ENCODE measurements at regions of chr17 and their contacts with region 1.

Region 1: GRCh38 chr17:75749545-75750389 is 15.2 kb downstream of the GALK1 start:
- DNase-seq: peak; percentile 77
- H3K4me3 Mint-ChIP-seq: no peak overlapping the region
- H3K27ac Mint-ChIP-seq: no peak overlapping the region
- H3K4me1 Mint-ChIP-seq: peaks cover 16% of the 10 kb centered on the region
- H3K27me3 Mint-ChIP-seq: peaks cover 12% of the 10 kb centered on the region

Region 2: GRCh38 chr17:75515496-75516254 is 234.1 kb before region 1 on chr17 and contains the start of gene CASKIN2:
- intact Hi-C with region 1: no loop called
- DNase-seq: peak; percentile 62
- H3K4me3 Mint-ChIP-seq: peak within 1 kb of the TSS; percentile 78
- H3K27ac Mint-ChIP-seq: no peak within 1 kb of the TSS
- H3K4me1 Mint-ChIP-seq: peaks cover 18% of the 10 kb centered on the region
- H3K27me3 Mint-ChIP-seq: peaks cover 17% of the 10 kb centered on the region
- total RNA-seq, gene CASKIN2: 0.88 and 2.0 TPM in 2 replicates

Region 3: GRCh38 chr17:75601057-75602051 is 148.4 kb before region 1 on chr17:
- intact Hi-C with region 1: loop called (anchors 1 kb)
- DNase-seq: peak; percentile 42
- H3K4me3 Mint-ChIP-seq: no peak overlapping the region
- H3K27ac Mint-ChIP-seq: no peak overlapping the region
- H3K4me1 Mint-ChIP-seq: no peaks in the 10 kb centered on the region
- H3K27me3 Mint-ChIP-seq: peaks cover 1% of the 10 kb centered on the region

Region 4: DNA sequence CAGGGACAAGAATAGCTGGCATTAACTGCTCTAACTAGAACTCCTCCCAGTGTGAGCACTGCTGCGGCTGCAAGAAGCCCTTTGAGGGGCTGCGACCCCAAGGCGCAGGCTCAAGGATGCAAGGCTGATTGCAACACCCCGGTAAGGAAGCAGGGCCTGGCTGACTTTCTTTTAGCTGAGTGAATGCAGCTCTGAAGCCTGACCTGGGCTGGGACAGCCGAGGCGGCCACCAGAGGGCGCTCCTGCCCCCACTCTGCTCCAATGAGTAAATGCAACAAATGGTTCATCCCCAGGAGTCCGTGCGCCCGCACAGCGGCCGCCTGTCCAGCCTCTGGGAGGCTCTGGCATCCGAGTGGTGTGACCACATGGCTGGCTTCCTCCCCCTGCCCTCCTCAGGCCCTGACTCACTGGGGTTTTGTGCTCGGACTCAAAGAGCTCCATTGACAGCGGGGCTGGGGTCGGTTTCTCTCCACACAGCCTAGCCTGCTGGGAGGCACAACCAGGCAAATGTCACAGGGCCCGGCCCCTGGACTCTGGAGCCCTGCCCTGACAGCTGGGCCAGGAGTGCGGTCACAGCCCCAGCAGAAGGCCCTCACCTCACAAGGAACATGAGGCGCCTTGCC is 116.8 kb before region 1 on chr17 and contains the start of gene SMIM5:
- intact Hi-C with region 1: loop called (anchors 1 kb)
- DNase-seq: peak; percentile 77
- H3K4me3 Mint-ChIP-seq: no peak within 1 kb of the TSS
- H3K27ac Mint-ChIP-seq: no peak within 1 kb of the TSS
- H3K4me1 Mint-ChIP-seq: no peaks in the 10 kb centered on the region
- H3K27me3 Mint-ChIP-seq: no peaks in the 10 kb centered on the region
- total RNA-seq, gene SMIM5: 0.05 TPM in 1 of 2 replicates, not detected in the other

Region 5: DNA sequence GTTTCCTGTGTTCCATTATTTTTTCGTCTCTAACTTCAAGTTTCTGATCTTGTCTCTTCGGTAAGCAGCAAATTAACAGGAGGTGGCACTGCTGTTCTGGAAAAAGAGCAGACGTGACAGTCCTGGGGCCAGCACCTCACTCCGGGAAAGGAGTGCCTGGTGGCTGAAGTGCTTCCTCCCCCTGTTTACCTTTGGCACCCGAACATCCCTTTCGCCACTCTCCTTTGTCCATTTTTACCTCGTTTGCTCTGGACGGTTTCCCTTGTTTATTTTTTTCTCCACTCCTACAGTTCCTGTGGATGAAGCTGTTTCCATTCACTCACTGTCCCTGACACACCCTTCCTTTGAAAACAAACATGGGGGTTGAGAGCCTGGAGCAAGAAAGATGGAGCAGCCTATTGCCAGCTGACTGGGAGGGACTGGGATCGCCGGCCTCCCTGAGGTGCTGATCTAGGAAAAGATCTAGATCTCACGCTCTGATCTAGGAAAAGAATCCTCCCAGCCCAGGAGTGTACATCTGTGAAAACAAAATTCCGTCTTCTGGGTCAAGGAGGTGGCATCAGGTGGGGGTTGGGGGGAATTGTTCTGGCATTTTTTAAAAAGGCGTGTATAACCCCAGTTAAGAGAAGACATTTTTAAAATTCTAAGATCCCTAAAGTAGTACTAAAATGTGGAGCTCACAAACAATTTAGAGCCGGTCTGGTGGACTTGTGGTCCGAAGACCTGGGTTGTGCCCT is 69.9 kb before region 1 on chr17:
- intact Hi-C with region 1: loop called (anchors 1 kb)
- DNase-seq: no peak
- H3K4me3 Mint-ChIP-seq: no peak overlapping the region
- H3K27ac Mint-ChIP-seq: no peak overlapping the region
- H3K4me1 Mint-ChIP-seq: peaks cover 13% of the 10 kb centered on the region
- H3K27me3 Mint-ChIP-seq: no peaks in the 10 kb centered on the region